GM18951 (cell line): ENCODE measurements at regions of chr12 and their contacts with region 1.

Region 1: GRCh38 chr12:575948-576612 is 87.2 kb downstream of the NINJ2 start:
- POLR2A ChIP-seq: no peak

Region 2: GRCh38 chr12:202081-202731 is 373.9 kb before region 1 on chr12:
- in situ Hi-C with region 1: no loop called
- POLR2A ChIP-seq: no peak

Region 3: GRCh38 chr12:292186-292585 is 283.9 kb before region 1 on chr12:
- in situ Hi-C with region 1: no loop called
- POLR2A ChIP-seq: no peak

Region 4: DNA sequence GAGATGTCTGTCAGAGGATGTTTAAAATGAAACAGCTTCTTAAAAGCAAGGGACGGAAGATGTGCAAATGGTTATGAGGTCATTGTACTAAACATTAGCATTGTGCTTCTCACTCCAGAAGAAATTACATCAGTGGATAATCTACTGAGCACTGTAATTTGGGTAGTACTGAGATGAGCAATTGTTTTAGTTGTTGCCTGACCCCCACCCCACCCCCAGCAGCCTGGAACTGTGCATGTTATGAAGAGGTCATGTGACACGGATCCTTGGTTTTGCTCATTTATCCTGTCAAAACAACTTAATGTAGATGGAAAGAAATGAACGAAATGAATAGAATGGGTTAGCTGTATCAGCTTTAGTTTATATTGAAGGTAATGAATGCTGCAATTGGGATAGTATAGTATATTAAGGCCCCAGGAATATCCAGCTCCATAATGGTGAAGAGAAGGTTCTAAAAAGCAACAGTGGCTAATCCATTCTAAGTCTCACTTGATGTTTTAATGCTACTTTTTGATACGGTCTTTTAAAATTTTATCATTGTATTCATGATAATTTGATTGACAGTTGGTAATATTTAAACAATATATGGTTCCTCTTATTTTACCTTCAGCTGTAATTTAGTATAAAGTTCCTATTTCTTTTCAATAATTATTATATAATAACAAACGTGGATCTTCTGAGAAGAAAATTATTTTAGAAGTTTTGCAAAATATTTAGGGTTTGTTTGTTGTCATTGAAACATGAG is 234.8 kb after region 1 on chr12:
- in situ Hi-C with region 1: loop called (anchors 10 kb)
- POLR2A ChIP-seq: no peak

Region 5: DNA sequence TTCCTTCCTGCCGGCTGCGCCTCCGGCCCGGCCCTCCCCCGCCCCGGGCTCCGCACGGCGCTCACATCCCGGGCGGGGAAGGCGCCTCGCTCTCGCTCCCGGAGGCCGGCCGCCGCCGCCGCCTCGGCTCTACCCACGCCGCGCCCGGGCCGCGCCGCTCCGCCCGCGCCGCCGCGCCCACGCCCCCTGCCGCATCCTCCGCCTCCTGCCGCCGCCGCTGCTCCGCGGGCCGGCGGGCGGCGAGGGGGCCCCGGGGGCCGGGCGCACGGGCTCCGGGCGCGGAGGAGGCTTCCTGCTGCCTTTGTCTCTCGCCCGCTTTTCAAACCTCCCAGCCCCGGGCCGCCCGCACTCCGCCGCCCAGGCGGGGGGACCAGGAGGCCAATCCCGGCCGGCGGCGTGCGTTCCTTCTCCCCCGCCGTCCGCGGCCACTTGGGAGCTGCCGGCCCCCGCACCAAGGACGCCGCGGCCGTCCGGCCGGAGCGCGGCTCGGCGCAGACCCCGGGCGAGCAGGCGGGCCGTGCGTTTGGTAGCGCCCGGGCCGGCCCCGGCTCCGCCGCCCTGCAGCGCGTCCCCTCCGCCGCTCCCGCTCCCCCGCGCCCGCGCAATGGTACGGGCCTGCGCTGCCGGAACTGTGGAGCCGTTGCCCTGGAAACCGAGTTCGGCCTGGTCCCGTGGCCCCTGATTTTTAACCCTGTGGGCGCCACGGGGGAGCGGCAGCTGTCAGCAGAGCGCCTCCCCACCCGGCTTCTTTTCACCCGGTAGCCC is 1018.4 kb after region 1 on chr12 and contains the start of gene FBXL14:
- in situ Hi-C with region 1: loop called (anchors 25 kb)
- POLR2A ChIP-seq: peak; percentile 52